ENCODE measurements at regions of chr9 and their contacts with region 1.

Region 1: DNA sequence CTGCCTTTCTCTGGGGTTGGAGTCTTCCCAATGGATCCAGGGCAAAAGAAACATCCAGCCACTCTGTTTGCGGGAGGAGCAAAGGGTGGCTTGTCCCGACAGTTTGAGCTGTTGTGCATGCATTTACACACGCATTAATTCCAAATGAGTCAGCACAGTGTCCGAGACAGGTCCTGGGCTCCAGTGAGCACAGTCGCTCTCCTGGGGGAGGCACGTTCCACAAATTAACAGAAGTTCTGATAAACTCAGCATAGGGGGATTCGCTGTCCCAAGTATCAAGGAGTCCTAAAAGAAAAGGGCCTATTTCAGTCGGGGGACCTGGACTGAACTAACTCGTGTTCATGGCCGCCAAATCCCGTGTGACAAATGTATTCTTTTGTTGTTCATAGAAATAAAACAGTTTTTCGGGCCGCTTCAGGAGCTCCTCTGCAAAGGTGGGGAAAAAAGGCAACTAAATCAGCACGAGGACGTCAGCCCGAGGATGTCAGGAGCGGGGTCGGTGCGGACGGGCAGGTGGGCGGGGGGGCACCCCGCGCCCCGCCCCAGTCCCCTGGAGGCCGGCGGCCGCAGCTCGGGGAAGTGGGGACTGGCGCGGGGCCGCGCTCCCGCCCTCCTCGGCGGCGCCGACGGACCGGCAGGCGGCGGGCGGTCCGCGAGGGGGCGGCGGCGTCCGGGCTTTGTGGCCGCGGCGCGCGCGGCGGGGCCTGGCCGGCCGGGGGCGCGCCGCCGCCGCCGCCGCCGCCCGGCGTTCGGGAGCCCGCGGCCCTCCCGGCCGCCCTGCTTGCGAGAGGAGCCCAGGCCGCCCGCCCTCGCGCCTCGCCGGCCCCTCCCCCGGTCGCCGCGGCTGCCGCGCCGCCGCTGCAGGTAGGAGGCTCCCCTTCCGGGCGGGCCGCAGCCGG is at the start of gene MSANTD3:
- DNase-seq: peak; percentile 84
- H3K4me3 ChIP-seq: peak within 1 kb of the TSS; percentile 91 to 96 (median 94)
- H3K27ac ChIP-seq: peak within 1 kb of the TSS; percentile 98
- H3K4me1 ChIP-seq: peaks cover 36% of the 10 kb centered on the region
- H3K27me3 ChIP-seq: no peaks in the 10 kb centered on the region
- CTCF ChIP-seq: no peak
- POLR2A ChIP-seq: peak; percentile 59
- total RNA-seq, gene MSANTD3: 82.7 and 88.5 TPM in 2 replicates

Region 2: DNA sequence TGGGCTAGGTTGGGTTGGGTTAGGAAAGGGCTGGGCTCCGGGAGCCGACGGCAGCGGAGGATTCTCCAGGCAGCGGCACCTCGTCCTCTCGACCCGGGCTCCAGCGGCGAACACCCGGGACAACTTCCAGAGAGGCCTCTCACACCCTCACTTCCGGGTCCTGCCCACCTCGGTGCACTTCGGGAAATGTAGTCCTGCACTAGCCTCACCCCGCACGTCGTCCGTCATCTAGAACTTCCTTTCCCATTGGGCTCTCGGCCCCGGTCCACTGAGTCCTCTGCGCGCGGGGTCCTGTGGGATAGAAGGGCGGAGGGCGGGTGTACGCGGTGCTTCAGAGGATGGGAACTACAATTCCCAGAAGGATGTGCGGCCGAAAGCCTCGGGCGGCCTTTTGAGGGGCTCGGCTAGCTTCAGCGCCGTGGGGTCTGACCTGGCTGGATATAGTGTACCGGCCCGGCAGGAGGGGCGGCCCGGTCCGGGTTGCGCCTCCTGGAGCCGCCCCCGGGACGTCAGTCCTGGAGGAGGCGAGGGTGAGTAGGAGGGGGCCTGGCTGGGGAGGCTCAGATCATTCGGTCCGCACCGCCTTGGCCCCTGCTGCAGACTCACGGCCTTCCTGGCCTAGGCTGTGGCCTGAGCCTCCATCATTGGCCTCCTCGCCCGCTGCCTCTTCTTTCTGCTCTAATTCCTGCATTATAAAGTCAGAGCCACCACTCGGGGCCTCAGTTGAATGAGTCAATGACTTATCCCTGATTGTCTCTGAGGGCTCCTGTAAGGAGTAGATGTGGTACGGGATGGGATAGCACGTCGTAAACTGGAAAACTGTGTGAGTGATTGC is 327.7 kb before region 1 on chr9 and contains the starts of genes ERP44 and INVS:
- CTCF ChIA-PET with region 1: no interaction called
- POLR2A ChIA-PET with region 1: no interaction called
- dilution Hi-C with region 1: no loop called
- intact Hi-C with region 1: loop called (anchors 5 kb)
- DNase-seq: peak; percentile 99
- H3K4me3 ChIP-seq: peak within 1 kb of the TSS; percentile 63 to 85 (median 76)
- H3K27ac ChIP-seq: peak within 1 kb of the TSS; percentile 74
- H3K4me1 ChIP-seq: peaks cover 20% of the 10 kb centered on the region
- H3K27me3 ChIP-seq: no peaks in the 10 kb centered on the region
- CTCF ChIP-seq: no peak
- POLR2A ChIP-seq: peak; percentile 93
- total RNA-seq, gene ERP44: 19.3 and 21.4 TPM in 2 replicates
- total RNA-seq, gene INVS: 17.9 and 20.3 TPM in 2 replicates

Region 3: DNA sequence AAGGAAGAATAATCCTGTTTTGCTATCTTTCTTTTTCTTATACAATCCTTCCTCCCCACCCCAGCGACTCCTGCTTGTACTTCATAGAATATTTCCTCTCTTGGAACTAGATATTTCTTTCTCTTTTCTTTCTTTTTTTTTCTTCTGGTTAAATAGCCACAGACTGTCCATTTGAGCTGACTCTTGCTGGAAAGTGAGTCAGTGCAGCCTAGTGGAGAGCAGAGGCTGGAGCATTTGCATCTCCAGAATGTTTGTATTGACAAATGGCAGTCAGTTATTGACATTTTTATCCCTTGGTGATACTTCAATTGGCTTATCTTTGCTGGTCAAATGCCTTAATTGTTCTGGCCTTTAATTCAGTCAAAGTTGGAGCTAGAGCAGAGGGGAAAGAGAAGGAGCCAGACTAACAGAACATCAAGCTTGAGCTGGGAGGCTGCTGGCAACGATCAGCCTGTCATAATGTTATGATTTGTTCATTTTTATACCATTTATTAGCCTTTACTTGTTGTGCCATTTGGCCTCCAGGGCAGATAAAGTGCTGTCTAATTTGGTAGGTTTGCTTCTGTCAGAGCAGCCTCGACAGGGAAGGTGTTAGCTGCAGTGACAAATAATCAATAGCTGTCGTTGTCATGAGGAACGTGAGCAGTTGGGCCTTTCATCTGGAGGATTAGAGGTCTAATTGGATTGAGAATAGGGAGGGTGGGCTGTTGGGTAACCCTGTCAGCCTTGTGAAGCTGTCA is 258.7 kb before region 1 on chr9:
- CTCF ChIA-PET with region 1: no interaction called
- POLR2A ChIA-PET with region 1: no interaction called
- dilution Hi-C with region 1: no loop called
- intact Hi-C with region 1: no loop called
- DNase-seq: no peak
- H3K4me3 ChIP-seq: no peak overlapping the region
- H3K27ac ChIP-seq: no peak overlapping the region
- H3K4me1 ChIP-seq: peaks cover 8% of the 10 kb centered on the region
- H3K27me3 ChIP-seq: no peaks in the 10 kb centered on the region
- CTCF ChIP-seq: no peak
- POLR2A ChIP-seq: no peak

Region 4: DNA sequence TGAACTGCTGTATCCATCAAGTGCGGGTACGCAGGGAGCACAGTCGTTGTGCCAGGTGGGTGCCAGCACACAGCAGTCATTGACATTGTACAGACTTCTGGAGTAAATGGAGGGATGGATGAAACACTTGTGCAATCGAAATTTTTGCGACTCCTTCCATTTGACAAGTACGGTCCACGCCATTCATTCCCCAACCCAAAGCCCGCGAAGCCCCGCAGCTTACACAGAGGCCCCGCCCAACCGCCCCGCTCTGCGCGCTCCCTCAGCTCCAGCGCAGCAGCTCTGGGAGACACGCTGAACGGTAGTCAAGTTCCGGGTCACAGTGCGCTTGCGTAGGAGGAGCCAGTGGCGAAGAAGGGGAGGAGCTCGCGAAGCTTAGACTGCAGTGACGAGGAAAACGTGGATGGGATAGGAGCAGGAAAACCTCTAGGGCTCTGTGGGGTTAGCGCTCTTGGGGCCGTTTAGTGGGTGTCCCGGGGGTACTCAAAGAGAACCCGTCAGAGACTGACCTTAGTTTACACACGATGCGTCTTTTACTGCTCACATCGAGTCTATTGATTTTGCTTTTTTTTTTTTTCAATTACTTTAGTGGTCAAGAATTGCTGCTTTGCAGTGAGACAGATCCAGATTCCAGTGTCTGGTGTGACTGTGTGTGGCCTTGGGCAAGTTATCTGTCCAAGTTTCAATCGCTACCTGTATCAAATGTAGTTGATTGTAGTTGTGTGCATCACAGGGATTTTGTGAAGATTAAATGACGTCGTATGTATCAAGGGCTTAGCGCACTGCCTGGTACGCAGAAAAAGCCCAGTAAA is 15.1 kb before region 1 on chr9:
- CTCF ChIA-PET with region 1: interaction called, 8 read pairs
- POLR2A ChIA-PET with region 1: interaction called, 8 read pairs
- dilution Hi-C with region 1: no loop called
- intact Hi-C with region 1: loop called (anchors 1 kb)
- DNase-seq: peak; percentile 90
- H3K4me3 ChIP-seq: peak overlapping the region in 2 of 3 experiments; percentile 25 to 57
- H3K27ac ChIP-seq: no peak overlapping the region
- H3K4me1 ChIP-seq: peaks cover 9% of the 10 kb centered on the region
- H3K27me3 ChIP-seq: peaks cover 3 to 8% of the 10 kb centered on the region in 2 experiments
- CTCF ChIP-seq: no peak
- POLR2A ChIP-seq: peak; percentile 75

Region 5: DNA sequence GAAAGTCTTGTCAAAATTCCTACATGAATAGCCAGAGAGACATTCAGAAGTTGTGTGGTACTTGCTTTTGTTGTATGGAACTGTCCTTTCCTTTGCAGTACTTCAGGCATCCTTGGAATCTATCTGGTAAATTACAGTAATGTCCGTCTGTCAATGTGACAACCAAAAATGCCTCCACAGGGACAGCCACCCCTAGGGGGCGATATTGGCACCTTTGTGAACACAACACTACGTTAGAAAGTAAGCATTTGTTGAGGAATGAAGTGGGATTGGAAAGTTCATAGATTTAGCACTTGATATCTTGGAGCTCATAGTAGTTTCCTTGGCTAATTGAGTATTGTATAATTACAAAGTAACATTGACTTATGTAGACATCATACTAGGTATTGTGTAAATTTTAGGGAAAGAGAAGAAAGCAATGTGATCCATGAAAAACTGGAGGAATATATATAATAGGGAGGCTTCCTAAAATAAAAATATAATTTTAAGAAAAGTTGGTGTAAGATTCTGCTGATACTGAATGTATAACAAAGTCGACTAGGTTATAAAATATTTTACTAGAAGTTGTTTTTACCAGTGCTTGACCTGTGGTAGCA is 78.9 kb after region 1 on chr9:
- CTCF ChIA-PET with region 1: interaction called, 3 read pairs
- POLR2A ChIA-PET with region 1: no interaction called
- dilution Hi-C with region 1: no loop called
- intact Hi-C with region 1: loop called (anchors 1 kb)
- DNase-seq: peak; percentile 61
- H3K4me3 ChIP-seq: no peak overlapping the region
- H3K27ac ChIP-seq: no peak overlapping the region
- H3K4me1 ChIP-seq: peaks cover 8% of the 10 kb centered on the region
- H3K27me3 ChIP-seq: no peaks in the 10 kb centered on the region
- CTCF ChIP-seq: peak; percentile 65 to 78
- POLR2A ChIP-seq: no peak

Region 6: DNA sequence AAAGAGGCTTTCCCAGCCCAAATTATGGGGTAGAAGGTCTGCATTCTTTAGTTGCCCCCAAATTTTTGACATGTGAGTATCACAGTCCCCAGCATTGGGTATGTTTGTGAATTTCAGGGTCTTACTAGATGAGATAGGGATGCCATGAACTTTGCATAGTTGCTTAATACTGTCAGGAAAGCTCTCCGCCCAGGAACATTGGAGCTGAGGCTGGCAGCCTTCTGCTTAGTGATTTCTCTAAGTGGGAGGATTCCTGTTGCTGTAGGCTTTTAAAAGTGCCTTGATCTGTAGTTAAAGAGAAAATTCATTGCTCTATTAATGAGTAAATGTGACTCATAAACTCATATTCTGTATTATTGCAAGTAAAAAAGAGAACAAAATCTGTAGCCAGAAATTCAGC is 358.0 kb after region 1 on chr9:
- CTCF ChIA-PET with region 1: no interaction called
- POLR2A ChIA-PET with region 1: no interaction called
- dilution Hi-C with region 1: no loop called
- intact Hi-C with region 1: no loop called
- DNase-seq: no peak
- H3K4me3 ChIP-seq: no peak overlapping the region
- H3K27ac ChIP-seq: no peak overlapping the region
- H3K4me1 ChIP-seq: no peaks in the 10 kb centered on the region
- H3K27me3 ChIP-seq: no peaks in the 10 kb centered on the region
- CTCF ChIP-seq: no peak
- POLR2A ChIP-seq: no peak

Region 7: GRCh38 chr9:101398068-101398929 is 971.5 kb after region 1 on chr9 and contains the starts of genes MRPL50 and ZNF189:
- CTCF ChIA-PET with region 1: no interaction called
- POLR2A ChIA-PET with region 1: no interaction called
- dilution Hi-C with region 1: no loop called
- intact Hi-C with region 1: loop called (anchors 2 kb)
- DNase-seq: peak; percentile 99
- H3K4me3 ChIP-seq: peak within 1 kb of the TSS; percentile 66 to 97 (median 92)
- H3K27ac ChIP-seq: peak within 1 kb of the TSS; percentile 87
- H3K4me1 ChIP-seq: peaks cover 26% of the 10 kb centered on the region
- H3K27me3 ChIP-seq: no peaks in the 10 kb centered on the region
- CTCF ChIP-seq: no peak
- POLR2A ChIP-seq: peak; percentile 78
- total RNA-seq, gene MRPL50: 8.6 and 9.7 TPM in 2 replicates
- total RNA-seq, gene ZNF189: 14.4 and 14.6 TPM in 2 replicates

Measured in endothelial cell of umbilical vein (primary cell).